HepG2 (cell line): ENCODE measurements at regions of chr7 and their contacts with region 1.

Region 1: DNA sequence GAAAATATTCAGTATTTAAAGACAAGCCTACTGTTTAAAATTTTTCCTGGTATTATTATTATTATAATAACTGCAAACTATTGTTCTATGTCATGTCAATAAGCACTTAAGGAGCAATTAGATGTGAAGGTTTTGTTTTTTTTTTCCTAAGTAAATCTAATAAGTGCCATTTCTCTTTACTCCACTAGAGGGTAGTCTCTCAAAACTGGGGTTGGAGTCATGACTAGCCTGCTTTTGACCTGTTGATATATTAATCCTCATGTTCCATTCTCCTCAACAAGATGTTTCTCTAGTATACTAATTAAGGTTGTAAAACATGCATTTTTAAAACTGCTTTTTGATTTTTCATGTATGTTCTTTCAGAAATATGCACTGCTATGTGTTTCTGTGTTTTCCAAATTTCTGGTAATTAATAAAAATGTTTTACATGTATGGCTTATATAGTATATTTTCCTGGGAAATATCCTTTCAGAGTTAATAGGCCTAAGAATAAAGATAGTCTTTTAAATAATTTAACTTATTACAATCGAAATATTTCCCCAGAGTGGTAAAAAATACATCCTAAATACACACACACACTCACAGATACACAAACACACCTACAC is 1.0 kb upstream of the LRRN3 start:
- DNase-seq: peak; percentile 40
- ATAC-seq: peak; percentile 45
- H3K4me3 ChIP-seq: no peak overlapping the region
- H3K27ac ChIP-seq: no peak overlapping the region
- H3K4me1 ChIP-seq: no peaks in the 10 kb centered on the region
- H3K27me3 ChIP-seq: no peaks in the 10 kb centered on the region
- CTCF ChIP-seq: peak; percentile 54
- EP300 ChIP-seq: no peak
- POLR2A ChIP-seq: no peak
- RAD21 ChIP-seq: no peak

Region 2: DNA sequence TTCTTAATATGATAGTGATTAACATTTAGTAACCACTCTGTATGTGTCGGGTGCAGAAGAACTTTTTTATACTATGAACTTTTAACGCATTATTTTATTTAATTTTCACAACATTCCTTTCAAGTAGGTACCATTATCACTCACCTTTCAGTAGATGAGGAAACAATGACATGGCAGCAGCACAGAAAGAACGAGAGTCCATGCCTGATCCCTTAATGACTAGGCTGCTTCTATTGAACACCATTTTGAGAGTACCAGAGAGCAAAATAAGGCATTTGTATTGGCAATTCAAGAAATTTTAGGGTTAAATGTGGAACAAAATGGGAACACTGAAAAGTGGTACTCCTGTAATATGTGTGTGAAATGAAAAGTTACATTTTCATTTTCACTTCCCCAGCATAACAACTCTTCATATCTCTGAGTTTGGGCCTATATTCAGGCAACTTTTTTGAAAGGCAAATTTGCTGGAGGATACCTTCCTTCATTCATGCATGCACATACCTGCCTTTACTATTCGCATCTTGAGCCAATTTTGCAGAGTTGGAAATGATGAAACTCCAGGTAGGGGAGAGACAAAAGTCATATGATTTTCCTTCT is 13.9 kb after region 1 on chr7:
- CTCF ChIA-PET with region 1: no interaction called
- POLR2A ChIA-PET with region 1: no interaction called
- in situ Hi-C with region 1: no loop called
- intact Hi-C with region 1: no loop called
- DNase-seq: no peak
- ATAC-seq: no peak
- H3K4me3 ChIP-seq: no peak overlapping the region
- H3K27ac ChIP-seq: no peak overlapping the region
- H3K4me1 ChIP-seq: no peaks in the 10 kb centered on the region
- H3K27me3 ChIP-seq: no peaks in the 10 kb centered on the region
- CTCF ChIP-seq: no peak
- EP300 ChIP-seq: no peak
- POLR2A ChIP-seq: no peak
- RAD21 ChIP-seq: no peak

Region 3: DNA sequence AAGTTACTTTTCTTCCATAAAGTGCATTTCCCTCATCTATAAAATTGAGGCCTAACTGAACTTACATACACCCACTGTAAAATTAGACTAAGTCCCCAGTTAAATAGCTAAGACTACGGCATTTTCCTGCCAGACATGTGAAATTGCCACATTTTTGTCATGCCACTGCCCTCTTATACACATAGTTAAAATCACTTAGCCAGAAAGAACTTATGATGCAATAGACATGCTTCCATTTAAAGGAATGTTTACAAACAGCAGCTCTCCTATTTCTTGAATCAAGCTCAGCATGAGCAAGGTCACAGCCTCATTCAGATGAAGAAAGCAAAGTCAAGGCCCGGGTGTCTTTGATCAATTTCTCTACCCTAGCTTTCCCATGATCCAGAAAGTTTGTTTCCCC is 176.7 kb after region 1 on chr7:
- CTCF ChIA-PET with region 1: no interaction called
- POLR2A ChIA-PET with region 1: no interaction called
- in situ Hi-C with region 1: no loop called
- intact Hi-C with region 1: no loop called
- DNase-seq: peak; percentile 30
- ATAC-seq: peak; percentile 51
- H3K4me3 ChIP-seq: no peak overlapping the region
- H3K27ac ChIP-seq: no peak overlapping the region
- H3K4me1 ChIP-seq: peaks cover 25% of the 10 kb centered on the region
- H3K27me3 ChIP-seq: no peaks in the 10 kb centered on the region
- CTCF ChIP-seq: no peak
- EP300 ChIP-seq: no peak
- POLR2A ChIP-seq: no peak
- RAD21 ChIP-seq: no peak

Region 4: GRCh38 chr7:111486472-111487142 is 396.7 kb after region 1 on chr7:
- CTCF ChIA-PET with region 1: interaction called, 11 read pairs
- POLR2A ChIA-PET with region 1: no interaction called
- in situ Hi-C with region 1: loop called (anchors 5 kb)
- intact Hi-C with region 1: loop called (anchors 1 kb)
- DNase-seq: peak; percentile 41
- ATAC-seq: peak; percentile 46
- H3K4me3 ChIP-seq: no peak overlapping the region
- H3K27ac ChIP-seq: no peak overlapping the region
- H3K4me1 ChIP-seq: no peaks in the 10 kb centered on the region
- H3K27me3 ChIP-seq: no peaks in the 10 kb centered on the region
- CTCF ChIP-seq: peak; percentile 73
- EP300 ChIP-seq: no peak
- POLR2A ChIP-seq: no peak
- RAD21 ChIP-seq: peak; percentile 39; the same call in 1 of the 2 replicates

Region 5: DNA sequence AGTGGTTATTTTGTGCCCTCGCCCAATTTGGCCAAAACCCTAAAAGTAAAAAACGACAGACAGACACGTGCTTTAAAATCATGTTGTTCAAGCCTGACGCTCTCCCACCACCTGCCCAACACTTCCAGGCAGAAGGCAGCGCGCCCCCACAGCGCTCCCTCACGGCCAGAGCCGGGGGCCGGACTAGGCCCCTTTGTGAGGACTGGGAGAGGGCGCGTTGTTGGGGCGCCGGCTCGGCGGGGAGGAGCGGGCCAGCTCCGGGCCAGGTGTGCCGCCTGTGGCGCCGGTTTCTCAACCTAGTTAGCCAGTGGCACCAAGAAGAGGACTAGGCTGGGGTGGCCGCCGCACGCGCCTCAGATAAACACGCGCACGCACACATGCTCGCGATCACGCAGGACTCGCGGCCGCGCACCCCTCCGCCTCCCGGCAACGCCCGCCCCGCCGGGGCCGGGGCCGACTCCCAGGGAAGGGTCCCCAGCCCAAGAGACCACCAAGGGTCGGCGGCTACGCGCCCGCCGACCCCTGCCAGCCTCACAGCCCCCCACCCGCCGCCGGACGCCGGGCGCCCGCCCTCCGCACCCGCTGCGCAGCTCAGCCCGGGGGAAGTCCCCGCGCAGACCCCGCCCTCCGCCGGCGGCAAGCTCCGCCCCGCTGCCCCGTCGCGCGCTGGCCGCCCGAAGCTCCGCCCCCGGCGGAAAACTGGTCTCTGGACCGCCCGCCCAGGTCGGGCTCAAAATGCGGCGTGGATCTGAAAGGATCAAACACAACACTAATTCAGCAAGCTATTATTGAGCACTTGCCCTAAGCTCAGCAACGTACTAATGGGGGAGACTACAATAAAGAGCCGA is 472.2 kb after region 1 on chr7 and contains the start of gene IMMP2L:
- CTCF ChIA-PET with region 1: no interaction called
- POLR2A ChIA-PET with region 1: no interaction called
- in situ Hi-C with region 1: no loop called
- intact Hi-C with region 1: loop called (anchors 5 kb)
- DNase-seq: peak; percentile 74
- ATAC-seq: peak; percentile 97
- H3K4me3 ChIP-seq: peak within 1 kb of the TSS; percentile 66 to 81 (median 80)
- H3K27ac ChIP-seq: peak within 1 kb of the TSS; percentile 77
- H3K4me1 ChIP-seq: peaks cover 23% of the 10 kb centered on the region
- H3K27me3 ChIP-seq: no peaks in the 10 kb centered on the region
- CTCF ChIP-seq: peak; percentile 84
- EP300 ChIP-seq: no peak
- POLR2A ChIP-seq: peak; percentile 53 to 80
- RAD21 ChIP-seq: peak; percentile 64
- total RNA-seq, gene IMMP2L: 11.3 and 16.9 TPM in 2 replicates